ENCODE measurements at regions of chr11 and their contacts with region 1.

Region 1: DNA sequence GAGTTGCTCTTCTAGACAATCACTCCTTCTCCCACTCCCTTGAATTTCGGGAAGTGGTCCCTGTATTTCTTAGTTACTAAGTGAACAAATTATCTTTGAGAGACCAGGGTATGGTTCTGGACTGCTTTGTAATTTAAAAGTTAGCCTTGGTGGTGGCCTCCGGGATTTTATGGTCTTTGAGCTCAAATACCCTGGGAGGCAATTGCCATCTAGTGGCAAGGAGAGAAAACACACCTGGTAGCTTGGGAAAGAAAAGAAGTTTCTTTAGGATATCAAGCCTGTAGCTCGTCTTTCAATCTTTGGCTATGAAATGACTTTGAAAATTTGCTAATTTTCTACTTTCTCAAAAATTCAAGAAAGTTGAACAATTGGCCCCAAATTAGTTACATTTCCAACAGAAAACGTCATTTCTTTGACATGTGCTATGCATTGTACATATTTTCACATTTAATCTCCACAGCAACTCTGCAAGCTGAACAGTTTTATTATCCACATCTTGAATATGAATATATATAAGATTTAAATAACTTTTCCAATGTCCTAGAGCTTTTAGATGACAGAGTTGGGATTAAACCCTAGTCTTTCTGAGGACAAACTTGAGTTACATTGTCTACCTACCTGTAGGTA is 39.1 kb downstream of the MMP27 start:
- DNase-seq: peak; percentile 37
- ATAC-seq: peak; percentile 74
- H3K4me3 ChIP-seq: no peak overlapping the region; a peak in 1 of 4 replicates
- H3K27ac ChIP-seq: no peak overlapping the region
- H3K4me1 ChIP-seq: peaks cover 0 to 12% of the 10 kb centered on the region in 2 experiments; a peak in 1 of 4 replicates
- H3K27me3 ChIP-seq: no peaks in the 10 kb centered on the region
- CTCF ChIP-seq: peak; percentile 82 to 92 (median 91)
- POLR2A ChIP-seq: no peak
- RAD21 ChIP-seq: peak; percentile 92

Region 2: GRCh38 chr11:101860696-101861427 is 805.6 kb before region 1 on chr11:
- CTCF ChIA-PET with region 1: interaction called, 20 read pairs
- POLR2A ChIA-PET with region 1: no interaction called
- RAD21 ChIA-PET with region 1: interaction called in 1 of 2 experiments, 3 read pairs
- intact Hi-C with region 1: loop called (anchors 5 kb)
- DNase-seq: peak; percentile 57
- ATAC-seq: peak; percentile 96
- H3K4me3 ChIP-seq: no peak overlapping the region
- H3K27ac ChIP-seq: no peak overlapping the region
- H3K4me1 ChIP-seq: peaks cover 0 to 38% of the 10 kb centered on the region in 2 experiments; a peak in 2 of 4 replicates
- H3K27me3 ChIP-seq: no peaks in the 10 kb centered on the region
- CTCF ChIP-seq: peak; percentile 78 to 81 (median 81)
- POLR2A ChIP-seq: no peak
- RAD21 ChIP-seq: peak; percentile 80

Region 3: DNA sequence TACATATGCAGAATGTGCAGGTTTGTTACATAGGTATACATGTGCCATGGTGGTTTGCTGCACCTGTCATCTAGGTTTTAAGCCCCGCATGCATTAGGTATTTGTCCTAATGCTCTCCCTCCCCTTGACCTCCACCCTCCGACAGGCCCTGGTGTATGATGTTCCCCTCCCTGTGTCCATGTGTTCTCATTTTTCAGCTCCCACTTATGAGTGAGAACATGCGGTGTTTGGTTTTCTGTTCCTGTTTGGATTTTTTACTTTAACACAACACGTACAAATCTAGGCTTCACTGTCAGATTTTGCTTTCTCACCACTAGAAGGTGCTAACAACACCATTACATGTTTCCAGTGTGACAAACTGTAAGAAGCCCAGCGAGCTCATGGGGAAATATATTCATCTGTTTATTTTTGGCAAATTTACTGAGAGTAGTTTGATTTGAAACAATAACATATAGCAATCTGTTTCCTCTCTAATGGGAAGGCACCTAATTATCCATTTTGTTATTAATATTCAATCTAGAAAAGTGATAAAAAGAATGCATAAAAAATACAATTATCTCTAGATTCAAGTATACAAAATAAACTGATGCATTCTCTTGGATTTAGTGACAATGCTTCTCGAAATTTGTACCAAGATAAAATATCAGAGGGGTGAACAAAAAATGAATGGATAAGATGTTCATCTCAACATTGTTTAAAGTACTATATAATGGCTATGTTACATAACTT is 372.4 kb before region 1 on chr11:
- CTCF ChIA-PET with region 1: interaction called, 15 read pairs
- POLR2A ChIA-PET with region 1: interaction called, 3 read pairs
- RAD21 ChIA-PET with region 1: interaction called in 1 of 2 experiments, 3 read pairs
- intact Hi-C with region 1: loop called (anchors 2 kb)
- DNase-seq: peak; percentile 62
- ATAC-seq: peak; percentile 95
- H3K4me3 ChIP-seq: no peak overlapping the region
- H3K27ac ChIP-seq: no peak overlapping the region
- H3K4me1 ChIP-seq: peaks cover 0 to 3% of the 10 kb centered on the region in 2 experiments; a peak in 1 of 4 replicates
- H3K27me3 ChIP-seq: no peaks in the 10 kb centered on the region
- CTCF ChIP-seq: peak; percentile 76 to 79 (median 78)
- POLR2A ChIP-seq: no peak
- RAD21 ChIP-seq: peak; percentile 70

Region 4: GRCh38 chr11:102390667-102391465 is 275.6 kb before region 1 on chr11:
- CTCF ChIA-PET with region 1: interaction called, 8 read pairs
- POLR2A ChIA-PET with region 1: no interaction called
- RAD21 ChIA-PET with region 1: interaction called in 1 of 2 experiments, 4 read pairs
- intact Hi-C with region 1: loop called (anchors 1 kb)
- DNase-seq: peak; percentile 42
- ATAC-seq: peak; percentile 92
- H3K4me3 ChIP-seq: no peak overlapping the region
- H3K27ac ChIP-seq: no peak overlapping the region
- H3K4me1 ChIP-seq: no peaks in the 10 kb centered on the region; a peak in 1 of 4 replicates
- H3K27me3 ChIP-seq: no peaks in the 10 kb centered on the region
- CTCF ChIP-seq: peak; percentile 69 to 87 (median 83)
- POLR2A ChIP-seq: no peak
- RAD21 ChIP-seq: peak; percentile 71

Region 5: GRCh38 chr11:102653744-102654291 is 12.6 kb before region 1 on chr11:
- CTCF ChIA-PET with region 1: interaction called, 11 read pairs
- POLR2A ChIA-PET with region 1: no interaction called
- RAD21 ChIA-PET with region 1: no interaction called
- intact Hi-C with region 1: no loop called
- DNase-seq: no peak
- ATAC-seq: 0 out of 2 replicates have a peak, but pooled peaks have one; percentile 11
- H3K4me3 ChIP-seq: no peak overlapping the region
- H3K27ac ChIP-seq: no peak overlapping the region
- H3K4me1 ChIP-seq: peaks cover 0 to 9% of the 10 kb centered on the region in 2 experiments; a peak in 1 of 4 replicates
- H3K27me3 ChIP-seq: no peaks in the 10 kb centered on the region
- CTCF ChIP-seq: no peak
- POLR2A ChIP-seq: no peak
- RAD21 ChIP-seq: no peak

Region 6: DNA sequence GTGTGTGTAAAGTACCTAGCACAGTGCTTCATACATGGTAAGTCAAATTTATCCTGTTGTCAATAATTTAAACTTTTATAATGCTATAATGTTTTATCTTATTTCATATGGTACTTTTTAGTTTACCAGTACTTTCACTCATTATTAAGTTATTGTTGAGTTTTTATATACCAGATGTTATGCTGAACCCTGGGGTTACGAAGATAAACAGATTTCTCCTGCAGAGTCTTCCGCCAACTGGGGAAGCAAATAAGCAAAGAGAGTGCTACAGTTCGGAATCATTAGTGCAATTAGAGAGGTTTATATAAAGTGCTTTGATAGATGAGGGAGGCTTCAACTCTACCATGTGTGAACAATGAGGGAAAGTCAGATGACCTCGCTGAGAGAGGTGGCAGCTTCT is 805.1 kb after region 1 on chr11:
- CTCF ChIA-PET with region 1: no interaction called
- POLR2A ChIA-PET with region 1: no interaction called
- RAD21 ChIA-PET with region 1: no interaction called
- intact Hi-C with region 1: no loop called
- DNase-seq: no peak
- ATAC-seq: no peak
- H3K4me3 ChIP-seq: no peak overlapping the region
- H3K27ac ChIP-seq: no peak overlapping the region
- H3K4me1 ChIP-seq: no peaks in the 10 kb centered on the region
- H3K27me3 ChIP-seq: no peaks in the 10 kb centered on the region
- CTCF ChIP-seq: no peak
- POLR2A ChIP-seq: no peak
- RAD21 ChIP-seq: no peak